Esophagus muscularis mucosa (tissue), 4 donors: ENCODE measurements at regions of chr11 and their contacts with region 1.

Region 1: GRCh38 chr11:73597956-73598718 is at the start of gene FAM168A:
- DNase-seq: peak; percentile 97
- H3K4me3 ChIP-seq: peak within 1 kb of the TSS; percentile 78 to 99 (median 92)
- H3K27ac ChIP-seq: peak within 1 kb of the TSS; percentile 84 to 88 (median 86)
- H3K4me1 ChIP-seq: peaks cover 13 to 41% (median 22%) of the 10 kb centered on the region in 4 donors
- H3K27me3 ChIP-seq: no peaks in the 10 kb centered on the region
- CTCF ChIP-seq: peak in 2 of 3 experiments; percentile 6 to 40
- EP300 ChIP-seq: no peak
- POLR2A ChIP-seq: no peak
- total RNA-seq, gene FAM168A: 31.1 to 50.8 (median 41.1) TPM

Region 2: GRCh38 chr11:73478738-73479347 is 119.3 kb before region 1 on chr11:
- intact Hi-C with region 1: loop called (anchors 10 kb)
- DNase-seq: no peak
- H3K4me3 ChIP-seq: no peak overlapping the region
- H3K27ac ChIP-seq: no peak overlapping the region
- H3K4me1 ChIP-seq: peaks cover 0 to 4% (median 0%) of the 10 kb centered on the region in 4 donors
- H3K27me3 ChIP-seq: no peaks in the 10 kb centered on the region
- CTCF ChIP-seq: peak; percentile 55 to 64 (median 62)
- EP300 ChIP-seq: no peak
- POLR2A ChIP-seq: no peak